CD4-positive, alpha-beta memory T cell (primary cell): ENCODE measurements at regions of chr2 and their contacts with region 1.

Region 1: GRCh38 chr2:854460-854859 is 96.2 kb upstream of the SNTG2 start:
- DNase-seq: peak in 2 of 5 donors; percentile 14 to 42
- H3K4me3 ChIP-seq: no peak overlapping the region
- H3K4me3 Mint-ChIP-seq: peak overlapping the region in 5 of 8 donors; percentile 32 to 71 (median 52)
- H3K27ac ChIP-seq: no peak overlapping the region
- H3K27ac Mint-ChIP-seq: peak overlapping the region in 3 of 7 donors; percentile 33 to 91 (median 43)
- H3K4me1 ChIP-seq: peaks cover 17% of the 10 kb centered on the region
- H3K4me1 Mint-ChIP-seq: peaks cover 9 to 31% (median 21%) of the 10 kb centered on the region in 4 donors
- H3K27me3 ChIP-seq: no peaks in the 10 kb centered on the region
- H3K27me3 Mint-ChIP-seq: no peaks in the 10 kb centered on the region

Region 2: DNA sequence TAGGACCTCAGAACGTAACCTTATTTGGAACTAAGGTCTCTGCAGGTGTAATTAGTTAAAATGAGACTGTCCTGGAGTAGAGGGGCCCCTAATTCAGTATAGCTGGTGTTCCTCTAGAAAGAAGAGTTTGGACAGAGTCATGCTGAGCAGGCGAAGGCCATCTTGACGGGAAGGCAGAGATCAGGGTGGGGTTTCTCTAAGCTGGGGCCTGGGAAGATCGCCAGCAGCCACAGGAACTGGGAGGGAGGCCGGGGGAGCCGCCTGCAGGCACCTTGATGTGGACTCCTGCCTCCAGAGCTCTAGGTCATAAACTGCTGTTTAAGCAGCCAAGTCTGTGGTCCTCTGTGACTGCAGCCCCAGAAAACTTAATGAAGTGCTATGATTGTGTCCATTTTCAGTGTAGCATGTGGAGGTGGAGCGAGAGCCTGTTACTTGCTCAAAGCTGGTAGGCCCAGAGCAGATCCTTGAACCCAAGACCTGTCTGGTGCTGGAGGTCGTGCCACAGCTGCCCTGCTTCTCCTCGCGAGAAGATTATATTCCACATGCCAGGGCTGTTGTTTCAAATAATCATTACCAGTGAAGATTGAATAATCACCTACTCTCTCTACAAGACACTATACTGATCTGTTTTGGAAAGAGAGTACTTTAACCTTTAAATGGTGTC is 664.5 kb after region 1 on chr2:
- CTCF ChIA-PET with region 1: no interaction called
- POLR2A ChIA-PET with region 1: no interaction called
- intact Hi-C with region 1: loop called (anchors 1 kb)
- DNase-seq: peak in 1 of 5 donors; percentile 9
- H3K4me3 ChIP-seq: no peak overlapping the region
- H3K4me3 Mint-ChIP-seq: peak overlapping the region in 5 of 8 donors; percentile 11 to 71 (median 56)
- H3K27ac ChIP-seq: peak overlapping the region; percentile 42
- H3K27ac Mint-ChIP-seq: peak overlapping the region; percentile 86 to 97 (median 94)
- H3K4me1 ChIP-seq: peaks cover 34% of the 10 kb centered on the region
- H3K4me1 Mint-ChIP-seq: peaks cover 20 to 40% (median 24%) of the 10 kb centered on the region in 4 donors
- H3K27me3 ChIP-seq: no peaks in the 10 kb centered on the region
- H3K27me3 Mint-ChIP-seq: no peaks in the 10 kb centered on the region